ENCODE measurements at regions of chr16 and their contacts with region 1.

Region 1: DNA sequence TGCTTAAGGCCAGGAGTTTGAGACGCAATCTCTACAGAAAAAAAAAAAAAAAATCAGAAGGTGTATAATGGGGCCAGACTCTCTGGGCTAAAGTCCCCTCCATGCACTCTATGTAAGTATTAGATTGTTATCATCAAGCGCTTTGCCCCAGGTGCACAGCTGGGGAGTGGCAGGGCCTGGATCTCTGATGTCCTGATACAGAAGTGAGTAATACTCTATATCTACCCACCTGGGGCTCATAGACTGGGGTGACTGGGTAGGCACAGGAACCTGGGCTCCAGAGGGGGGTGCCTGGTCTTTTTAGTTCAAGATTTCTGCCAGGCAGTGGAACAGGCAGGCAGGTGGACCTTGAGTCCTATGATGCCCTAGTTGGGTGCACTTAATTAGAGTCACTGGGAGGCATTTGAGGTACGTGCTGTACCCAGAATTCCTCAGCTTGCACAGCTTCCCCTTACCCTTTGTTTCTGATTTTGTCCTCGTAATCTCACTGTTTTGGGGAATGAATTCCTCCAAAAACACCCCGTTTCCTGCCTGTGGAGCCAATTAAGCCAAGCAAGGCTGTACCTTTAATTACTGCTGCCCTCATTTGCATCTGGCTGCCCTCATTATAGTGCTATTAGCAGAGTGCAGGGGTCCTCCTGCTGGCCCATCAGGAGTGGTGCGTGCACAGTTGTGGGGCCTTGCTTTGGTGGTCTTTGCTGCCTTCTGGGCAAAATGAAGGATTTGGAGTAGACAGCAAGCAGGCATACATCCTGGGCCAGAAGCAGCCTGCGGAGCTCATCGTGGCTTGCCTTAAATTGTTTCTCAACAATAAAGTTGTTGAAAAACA is 239.0 kb downstream of the SNX29 start:
- DNase-seq: no peak
- ATAC-seq: peak in 3 of 8 donors; percentile 45 to 49 (median 46)
- H3K4me3 ChIP-seq: no peak overlapping the region
- H3K27ac ChIP-seq: no peak overlapping the region
- H3K4me1 ChIP-seq: no peaks in the 10 kb centered on the region
- H3K27me3 ChIP-seq: no peaks in the 10 kb centered on the region
- CTCF ChIP-seq: peak in 6 of 9 donors; percentile 12 to 44 (median 28)

Region 2: DNA sequence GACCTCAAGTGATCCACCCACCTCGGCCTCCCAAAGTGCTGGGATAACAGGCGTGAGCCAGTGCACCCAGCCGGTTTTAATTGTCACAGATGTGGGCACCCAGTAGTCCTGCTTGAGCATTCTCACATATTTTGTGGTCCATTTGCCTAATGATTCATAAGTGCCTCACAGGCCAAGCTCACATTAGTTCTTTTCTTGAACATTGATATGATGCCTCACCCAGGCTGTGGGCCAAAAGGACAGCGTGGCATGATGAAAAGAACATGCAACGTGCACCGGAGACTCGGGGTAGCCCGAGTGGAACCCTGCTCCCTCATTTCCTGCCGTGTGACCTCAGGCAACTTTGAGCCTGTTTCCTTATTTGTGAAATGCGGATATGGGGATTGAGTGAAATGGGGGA is 57.1 kb before region 1 on chr16:
- intact Hi-C with region 1: loop called in 1 of 10 experiments (anchors 10 kb)
- DNase-seq: no peak
- ATAC-seq: no peak
- H3K4me3 ChIP-seq: no peak overlapping the region
- H3K27ac ChIP-seq: no peak overlapping the region
- H3K4me1 ChIP-seq: peaks cover 3 to 43% (median 29%) of the 10 kb centered on the region in 9 donors
- H3K27me3 ChIP-seq: no peaks in the 10 kb centered on the region
- CTCF ChIP-seq: no peak

Region 3: GRCh38 chr16:13138528-13138927 is 923.0 kb after region 1 on chr16:
- intact Hi-C with region 1: no loop called
- DNase-seq: no peak
- ATAC-seq: no peak
- H3K4me3 ChIP-seq: no peak overlapping the region
- H3K27ac ChIP-seq: no peak overlapping the region
- H3K4me1 ChIP-seq: no peaks in the 10 kb centered on the region
- H3K27me3 ChIP-seq: no peaks in the 10 kb centered on the region
- CTCF ChIP-seq: no peak